Activated CD4-positive, alpha-beta memory T cell treated with anti-CD3 and anti-CD28 coated beads for 36 hours (primary cell): ENCODE measurements at regions of chr17 and their contacts with region 1.

Region 1: DNA sequence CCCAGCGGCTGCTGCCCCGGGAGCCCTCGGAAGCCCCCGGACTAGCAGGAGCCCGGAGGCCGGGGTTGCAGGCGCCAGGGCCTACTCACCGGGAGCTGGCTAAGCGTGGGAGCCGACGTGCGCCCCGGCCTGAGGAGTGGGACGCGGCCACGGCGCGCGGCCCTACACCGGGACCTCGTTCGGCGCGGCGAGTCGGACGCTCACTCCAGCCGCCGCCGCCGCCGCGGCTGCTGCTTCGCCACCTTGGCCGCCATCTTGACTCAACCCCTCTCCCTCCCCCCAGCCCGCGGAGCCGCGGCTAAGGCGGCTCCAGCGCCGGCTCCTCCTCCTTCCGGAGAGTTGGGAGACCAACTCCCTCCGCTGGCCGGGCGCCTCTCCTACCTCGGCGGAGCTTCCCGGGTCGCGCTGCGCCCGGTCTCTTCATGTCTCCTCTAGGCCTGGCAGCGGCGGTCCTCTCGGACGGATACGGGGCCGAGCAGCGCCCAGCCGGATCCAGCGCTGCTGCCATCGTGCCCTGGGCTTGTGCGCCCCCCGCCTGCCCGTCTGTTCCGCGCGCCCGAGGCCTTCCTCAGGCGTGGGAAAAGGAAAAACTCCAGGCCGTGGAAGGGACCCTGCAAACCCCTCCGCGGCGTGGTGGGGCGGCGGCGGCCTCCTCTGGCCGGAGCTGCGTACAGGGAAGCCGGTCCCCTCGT is at the start of gene NCOR1:
- DNase-seq: peak; percentile 93
- H3K4me3 Mint-ChIP-seq: peak within 1 kb of the TSS; percentile 85
- H3K27ac Mint-ChIP-seq: peak within 1 kb of the TSS; percentile 85
- H3K4me1 Mint-ChIP-seq: peaks cover 40% of the 10 kb centered on the region
- H3K27me3 Mint-ChIP-seq: no peaks in the 10 kb centered on the region
- total RNA-seq, gene NCOR1: 104 to 112 TPM

Region 2: GRCh38 chr17:15999439-16000350 is 215.7 kb before region 1 on chr17 and contains the starts of genes TTC19 and ZSWIM7:
- CTCF ChIA-PET with region 1: no interaction called
- POLR2A ChIA-PET with region 1: no interaction called
- intact Hi-C with region 1: loop called (anchors 2 kb)
- DNase-seq: peak; percentile 97
- H3K4me3 Mint-ChIP-seq: peak within 1 kb of the TSS; percentile 96
- H3K27ac Mint-ChIP-seq: peak within 1 kb of the TSS; percentile 89
- H3K4me1 Mint-ChIP-seq: peaks cover 31% of the 10 kb centered on the region
- H3K27me3 Mint-ChIP-seq: no peaks in the 10 kb centered on the region
- total RNA-seq, gene TTC19: 21.0 to 22.6 TPM
- total RNA-seq, gene ZSWIM7: 11.2 to 12.0 TPM

Region 3: GRCh38 chr17:16027708-16028584 is 187.5 kb before region 1 on chr17:
- CTCF ChIA-PET with region 1: no interaction called
- POLR2A ChIA-PET with region 1: no interaction called
- intact Hi-C with region 1: loop called (anchors 10 kb)
- DNase-seq: peak; percentile 81
- H3K4me3 Mint-ChIP-seq: peak overlapping the region; percentile 64
- H3K27ac Mint-ChIP-seq: peak overlapping the region; percentile 97
- H3K4me1 Mint-ChIP-seq: peaks cover 48% of the 10 kb centered on the region
- H3K27me3 Mint-ChIP-seq: no peaks in the 10 kb centered on the region

Region 4: DNA sequence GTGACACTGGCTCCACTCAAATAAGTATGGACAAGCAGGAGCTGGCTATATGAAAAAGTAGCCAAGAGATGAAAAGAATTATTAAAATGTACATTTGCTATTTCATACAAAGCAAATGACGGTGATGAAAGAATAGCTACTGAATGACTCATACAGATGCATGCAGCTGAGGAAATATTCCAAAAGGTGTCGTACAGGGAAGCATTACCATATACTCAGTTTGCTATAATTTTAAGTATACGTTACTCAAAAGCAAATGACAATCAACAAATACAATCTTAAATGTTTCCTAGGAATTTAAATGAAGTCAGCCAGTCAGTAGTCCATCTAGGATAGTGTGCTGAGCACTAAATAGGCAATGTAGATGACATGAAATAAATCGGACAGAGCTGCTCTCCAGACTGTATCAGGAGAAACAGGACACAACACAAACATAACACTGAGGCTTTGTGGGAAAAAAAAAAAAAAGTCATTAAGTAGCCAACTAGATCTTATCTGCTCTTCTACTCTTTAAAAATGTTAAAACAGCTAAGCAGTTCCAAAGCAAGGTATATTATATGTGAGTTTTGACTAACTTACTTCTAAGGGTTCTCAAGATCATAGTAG is 65.1 kb before region 1 on chr17:
- CTCF ChIA-PET with region 1: no interaction called
- POLR2A ChIA-PET with region 1: no interaction called
- intact Hi-C with region 1: no loop called
- DNase-seq: no peak
- H3K4me3 Mint-ChIP-seq: no peak overlapping the region
- H3K27ac Mint-ChIP-seq: no peak overlapping the region
- H3K4me1 Mint-ChIP-seq: no peaks in the 10 kb centered on the region
- H3K27me3 Mint-ChIP-seq: no peaks in the 10 kb centered on the region

Region 5: GRCh38 chr17:16232391-16232790 is 17.0 kb after region 1 on chr17:
- CTCF ChIA-PET with region 1: interaction called, 4 read pairs
- POLR2A ChIA-PET with region 1: interaction called, 7 read pairs
- intact Hi-C with region 1: loop called (anchors 1 kb)
- DNase-seq: no peak
- H3K4me3 Mint-ChIP-seq: no peak overlapping the region
- H3K27ac Mint-ChIP-seq: no peak overlapping the region
- H3K4me1 Mint-ChIP-seq: peaks cover 19% of the 10 kb centered on the region
- H3K27me3 Mint-ChIP-seq: no peaks in the 10 kb centered on the region

Region 6: GRCh38 chr17:16258901-16259300 is 43.5 kb after region 1 on chr17:
- CTCF ChIA-PET with region 1: no interaction called
- POLR2A ChIA-PET with region 1: no interaction called
- intact Hi-C with region 1: no loop called
- DNase-seq: no peak
- H3K4me3 Mint-ChIP-seq: no peak overlapping the region
- H3K27ac Mint-ChIP-seq: no peak overlapping the region
- H3K4me1 Mint-ChIP-seq: no peaks in the 10 kb centered on the region
- H3K27me3 Mint-ChIP-seq: no peaks in the 10 kb centered on the region

Region 7: GRCh38 chr17:16285957-16286640 is 70.7 kb after region 1 on chr17:
- CTCF ChIA-PET with region 1: interaction called, 5 read pairs
- POLR2A ChIA-PET with region 1: interaction called, 5 read pairs
- intact Hi-C with region 1: loop called (anchors 1 kb)
- DNase-seq: peak; percentile 90
- H3K4me3 Mint-ChIP-seq: peak overlapping the region; percentile 68
- H3K27ac Mint-ChIP-seq: peak overlapping the region; percentile 94
- H3K4me1 Mint-ChIP-seq: peaks cover 52% of the 10 kb centered on the region
- H3K27me3 Mint-ChIP-seq: no peaks in the 10 kb centered on the region

Region 8: GRCh38 chr17:16342979-16343378 is 127.6 kb after region 1 on chr17:
- CTCF ChIA-PET with region 1: no interaction called
- POLR2A ChIA-PET with region 1: no interaction called
- intact Hi-C with region 1: no loop called
- DNase-seq: no peak
- H3K4me3 Mint-ChIP-seq: no peak overlapping the region
- H3K27ac Mint-ChIP-seq: no peak overlapping the region
- H3K4me1 Mint-ChIP-seq: no peaks in the 10 kb centered on the region
- H3K27me3 Mint-ChIP-seq: no peaks in the 10 kb centered on the region

Region 9: GRCh38 chr17:16380640-16381495 is 165.4 kb after region 1 on chr17 and contains the start of gene UBB:
- CTCF ChIA-PET with region 1: no interaction called
- POLR2A ChIA-PET with region 1: interaction called, 6 read pairs
- intact Hi-C with region 1: loop called (anchors 2 kb)
- DNase-seq: peak; percentile 98
- H3K4me3 Mint-ChIP-seq: peak within 1 kb of the TSS; percentile 93
- H3K27ac Mint-ChIP-seq: peak within 1 kb of the TSS; percentile 99
- H3K4me1 Mint-ChIP-seq: peaks cover 40% of the 10 kb centered on the region
- H3K27me3 Mint-ChIP-seq: no peaks in the 10 kb centered on the region
- total RNA-seq, gene UBB: 1,695 to 1,771 TPM

Region 10: DNA sequence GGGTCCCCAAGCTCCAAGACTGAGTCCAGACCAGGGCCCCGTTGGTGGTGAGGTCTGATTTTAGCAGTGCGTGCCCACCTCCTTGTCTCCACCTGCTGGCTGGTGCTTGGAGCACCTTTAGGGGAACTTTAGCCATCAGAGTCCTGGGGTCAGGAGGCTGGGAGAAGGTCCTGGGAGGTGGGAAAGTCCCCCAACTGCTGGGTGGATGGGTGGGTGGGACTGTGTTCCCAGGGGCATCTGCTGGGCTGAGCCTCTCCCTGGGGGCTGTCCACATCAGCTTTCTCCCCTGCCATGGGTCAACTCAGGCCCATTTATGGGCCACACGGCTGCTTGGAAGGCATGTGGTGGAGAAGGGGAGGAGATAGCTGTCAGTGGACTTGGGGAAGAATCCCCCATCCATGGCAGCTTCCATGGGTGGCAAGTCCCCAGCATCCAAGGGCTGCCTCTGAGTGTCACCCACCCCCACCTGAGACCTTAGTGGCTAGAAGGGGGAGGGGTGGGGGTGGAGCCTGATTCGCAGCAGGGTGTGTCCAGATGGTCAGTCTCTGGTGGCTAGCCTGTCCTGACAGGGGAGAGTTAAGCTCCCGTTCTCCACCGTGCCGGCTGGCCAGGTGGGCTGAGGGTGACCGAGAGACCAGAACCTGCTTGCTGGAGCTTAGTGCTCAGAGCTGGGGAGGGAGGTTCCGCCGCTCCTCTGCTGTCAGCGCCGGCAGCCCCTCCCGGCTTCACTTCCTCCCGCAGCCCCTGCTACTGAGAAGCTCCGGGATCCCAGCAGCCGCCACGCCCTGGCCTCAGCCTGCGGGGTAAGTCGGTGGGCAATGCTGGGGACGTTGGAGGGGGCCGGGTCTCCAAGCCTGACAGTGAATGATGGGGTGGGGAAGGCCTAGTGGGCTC is 199.9 kb after region 1 on chr17 and contains the start of gene TRPV2:
- CTCF ChIA-PET with region 1: no interaction called
- POLR2A ChIA-PET with region 1: no interaction called
- intact Hi-C with region 1: loop called (anchors 5 kb)
- DNase-seq: peak; percentile 72
- H3K4me3 Mint-ChIP-seq: peak within 1 kb of the TSS; percentile 94
- H3K27ac Mint-ChIP-seq: peak within 1 kb of the TSS; percentile 100
- H3K4me1 Mint-ChIP-seq: peaks cover 47% of the 10 kb centered on the region
- H3K27me3 Mint-ChIP-seq: no peaks in the 10 kb centered on the region
- total RNA-seq, gene TRPV2: 46.0 to 50.6 TPM